HAP-1 (cell line): ENCODE measurements at regions of chr3 and their contacts with region 1.

Region 1: GRCh38 chr3:124559881-124560574 is 170.2 kb upstream of the UMPS start:
- DNase-seq: peak; percentile 78 to 85
- H3K4me3 ChIP-seq: no peak overlapping the region
- H3K4me1 ChIP-seq: peaks cover 22% of the 10 kb centered on the region
- H3K27me3 ChIP-seq: no peaks in the 10 kb centered on the region

Region 2: DNA sequence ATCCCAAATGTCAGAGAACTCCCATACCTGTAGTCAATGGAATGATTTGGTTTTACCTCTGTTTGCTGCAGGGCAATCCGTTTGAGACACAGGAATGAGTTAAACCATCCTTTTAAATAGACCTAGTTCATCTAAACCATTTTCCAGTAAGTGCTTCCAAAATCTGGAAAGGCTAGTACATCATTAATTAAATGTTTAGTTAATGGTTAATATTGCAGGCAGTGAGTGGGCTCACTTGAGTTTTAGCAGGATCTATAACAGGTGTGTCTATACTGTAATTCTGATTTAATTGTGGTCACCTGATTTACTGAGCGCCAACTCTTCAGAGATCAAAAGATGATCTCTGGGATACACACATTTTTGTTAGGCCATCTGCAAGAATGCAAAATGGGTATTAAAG is 214.2 kb before region 1 on chr3:
- in situ Hi-C with region 1: no loop called
- DNase-seq: no peak
- H3K4me3 ChIP-seq: no peak overlapping the region
- H3K4me1 ChIP-seq: no peaks in the 10 kb centered on the region; the same call in 1 of the 2 replicates
- H3K27me3 ChIP-seq: peaks cover 8% of the 10 kb centered on the region

Region 3: DNA sequence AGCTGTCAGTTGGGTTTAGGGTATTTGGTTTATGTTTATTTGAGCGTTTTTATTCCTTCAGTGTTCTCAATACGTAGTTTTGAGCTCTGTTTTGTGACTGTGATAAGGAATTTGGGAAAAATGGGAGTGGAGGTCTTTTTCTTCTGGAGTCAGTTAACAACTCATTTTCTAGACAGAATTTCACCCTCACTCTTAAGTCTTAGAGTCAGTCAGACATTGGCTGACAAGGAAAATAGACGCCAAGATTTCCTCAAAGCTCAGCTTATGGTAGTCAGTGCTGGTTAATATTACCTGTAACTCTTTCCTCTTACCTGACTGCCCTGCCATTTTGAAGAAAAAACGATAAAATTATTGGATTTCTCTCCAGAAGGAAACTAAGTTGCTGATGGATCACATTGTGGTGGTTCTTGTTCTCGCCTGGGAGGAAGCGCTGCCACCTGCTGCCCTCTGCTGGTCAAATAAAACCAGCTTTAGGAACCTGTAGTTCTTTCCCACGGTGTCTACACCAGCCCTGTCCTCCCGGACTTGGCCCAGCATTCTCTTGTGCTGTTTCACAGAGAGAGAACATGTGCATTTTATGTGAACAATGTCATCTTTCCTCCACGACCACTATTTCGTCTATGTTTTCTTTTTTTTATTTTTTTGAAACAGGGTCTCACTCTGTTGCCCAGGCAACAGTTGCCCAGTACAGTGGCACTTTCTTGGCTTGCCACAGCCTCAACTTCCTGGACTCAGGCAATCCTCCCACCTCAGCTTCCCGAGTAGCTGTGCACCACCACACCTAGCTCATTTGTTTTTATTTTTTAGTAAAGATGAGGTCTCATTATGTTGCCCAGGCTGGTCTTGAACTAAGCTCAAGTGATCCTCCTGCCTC is 128.8 kb after region 1 on chr3:
- in situ Hi-C with region 1: loop called (anchors 5 kb)
- DNase-seq: peak; percentile 59 to 85
- H3K4me3 ChIP-seq: no peak overlapping the region
- H3K4me1 ChIP-seq: no peaks in the 10 kb centered on the region
- H3K27me3 ChIP-seq: no peaks in the 10 kb centered on the region

Region 4: GRCh38 chr3:124905849-124906248 is 345.8 kb after region 1 on chr3:
- in situ Hi-C with region 1: loop called (anchors 10 kb)
- DNase-seq: no peak
- H3K4me3 ChIP-seq: no peak overlapping the region
- H3K4me1 ChIP-seq: no peaks in the 10 kb centered on the region
- H3K27me3 ChIP-seq: peaks cover 8% of the 10 kb centered on the region